ENCODE measurements at regions of chr7 and their contacts with region 1.

Region 1: DNA sequence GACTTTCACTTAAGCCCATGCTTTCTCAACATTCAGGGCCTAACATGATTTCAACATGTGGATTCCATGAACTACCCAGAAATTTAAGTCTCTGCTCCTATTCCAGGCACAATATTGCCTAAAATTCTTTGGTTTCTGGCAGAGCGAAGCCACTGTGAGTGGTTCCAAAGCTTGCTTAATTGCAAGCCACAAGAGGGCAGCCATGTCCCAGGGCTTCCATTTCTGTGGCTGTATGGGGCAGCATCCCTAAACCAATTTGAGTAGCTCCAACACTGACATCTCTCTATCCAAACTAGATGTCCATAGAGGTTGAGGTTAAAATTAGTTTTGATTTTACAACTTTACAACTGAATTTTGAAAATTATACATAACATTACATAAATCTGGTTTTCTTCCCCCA is 56.3 kb upstream of the MDFIC start:
- DNase-seq: peak; percentile 44 to 61 (median 55)
- H3K4me3 ChIP-seq: no peak overlapping the region
- H3K4me3 Mint-ChIP-seq: no peak overlapping the region
- H3K27ac ChIP-seq: no peak overlapping the region
- H3K27ac Mint-ChIP-seq: no peak overlapping the region
- H3K4me1 ChIP-seq: no peaks in the 10 kb centered on the region
- H3K4me1 Mint-ChIP-seq: peaks cover 2 to 14% (median 8%) of the 10 kb centered on the region in 4 donors
- H3K27me3 ChIP-seq: no peaks in the 10 kb centered on the region
- H3K27me3 Mint-ChIP-seq: no peaks in the 10 kb centered on the region

Region 2: DNA sequence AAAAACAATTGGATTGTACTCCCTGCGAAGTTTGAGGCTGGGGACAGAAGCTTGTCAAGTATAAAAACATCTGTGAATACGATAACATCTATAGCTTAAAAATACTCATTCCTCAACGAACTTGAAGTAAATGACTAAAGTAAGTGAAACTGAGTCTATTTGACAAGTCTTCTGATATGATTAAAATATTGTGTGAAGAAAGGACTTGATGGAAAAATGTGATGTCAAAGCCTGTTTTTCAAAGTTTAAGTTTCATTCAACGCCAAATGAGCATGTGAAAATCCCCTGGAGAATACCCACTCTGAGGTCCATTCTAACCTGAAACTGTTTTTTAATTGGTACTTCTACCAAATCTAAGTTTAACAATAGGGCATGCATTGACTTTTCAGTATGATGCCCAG is 65.9 kb before region 1 on chr7:
- CTCF ChIA-PET with region 1: no interaction called
- POLR2A ChIA-PET with region 1: no interaction called
- intact Hi-C with region 1: no loop called
- DNase-seq: no peak
- H3K4me3 ChIP-seq: no peak overlapping the region
- H3K4me3 Mint-ChIP-seq: no peak overlapping the region
- H3K27ac ChIP-seq: no peak overlapping the region
- H3K27ac Mint-ChIP-seq: no peak overlapping the region
- H3K4me1 ChIP-seq: no peaks in the 10 kb centered on the region
- H3K4me1 Mint-ChIP-seq: peaks cover 0 to 4% (median 3%) of the 10 kb centered on the region in 4 donors
- H3K27me3 ChIP-seq: no peaks in the 10 kb centered on the region
- H3K27me3 Mint-ChIP-seq: peaks cover 2 to 6% of the 10 kb centered on the region in 2 donors

Region 3: GRCh38 chr7:114939484-114940097 is 74.0 kb after region 1 on chr7:
- CTCF ChIA-PET with region 1: interaction called, 138 read pairs
- POLR2A ChIA-PET with region 1: interaction called, 5 read pairs
- intact Hi-C with region 1: loop called (anchors 1 kb)
- DNase-seq: peak in 1 of 5 donors; percentile 56
- H3K4me3 ChIP-seq: no peak overlapping the region
- H3K4me3 Mint-ChIP-seq: peak overlapping the region in 4 of 8 donors; percentile 32 to 61 (median 48)
- H3K27ac ChIP-seq: no peak overlapping the region
- H3K27ac Mint-ChIP-seq: peak overlapping the region in 2 of 7 donors; percentile 18 to 55
- H3K4me1 ChIP-seq: peaks cover 84% of the 10 kb centered on the region
- H3K4me1 Mint-ChIP-seq: peaks cover 60 to 80% (median 64%) of the 10 kb centered on the region in 4 donors
- H3K27me3 ChIP-seq: no peaks in the 10 kb centered on the region
- H3K27me3 Mint-ChIP-seq: no peaks in the 10 kb centered on the region

Region 4: GRCh38 chr7:114997487-114998404 is 132.2 kb after region 1 on chr7:
- CTCF ChIA-PET with region 1: interaction called, 13 read pairs
- POLR2A ChIA-PET with region 1: interaction called, 4 read pairs
- intact Hi-C with region 1: no loop called
- DNase-seq: no peak
- H3K4me3 ChIP-seq: no peak overlapping the region
- H3K4me3 Mint-ChIP-seq: peak overlapping the region in 7 of 8 donors; percentile 48 to 83 (median 72)
- H3K27ac ChIP-seq: no peak overlapping the region
- H3K27ac Mint-ChIP-seq: peak overlapping the region; percentile 57 to 86 (median 71)
- H3K4me1 ChIP-seq: peaks cover 62% of the 10 kb centered on the region
- H3K4me1 Mint-ChIP-seq: peaks cover 61 to 86% (median 72%) of the 10 kb centered on the region in 4 donors
- H3K27me3 ChIP-seq: no peaks in the 10 kb centered on the region
- H3K27me3 Mint-ChIP-seq: no peaks in the 10 kb centered on the region

Region 5: DNA sequence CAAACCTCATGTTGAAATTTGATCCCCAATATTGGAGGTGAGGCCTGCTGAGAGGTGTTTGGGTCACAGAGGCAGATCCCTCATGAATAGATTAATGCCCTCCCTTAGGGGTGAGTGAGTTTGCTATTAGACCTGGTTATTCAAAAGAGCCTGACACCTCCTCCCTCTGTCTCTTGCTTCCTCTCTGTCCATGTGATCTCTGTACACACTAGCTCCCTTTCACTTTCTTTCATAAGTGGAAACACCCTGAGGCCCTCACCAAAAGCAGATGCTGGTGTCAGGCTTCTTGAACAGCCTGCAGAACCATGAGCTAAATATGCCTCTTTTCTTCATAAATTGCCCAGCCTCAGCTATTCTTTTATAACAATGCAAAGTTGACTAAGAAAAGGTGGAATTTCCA is 503.4 kb after region 1 on chr7:
- CTCF ChIA-PET with region 1: interaction called, 5 read pairs
- POLR2A ChIA-PET with region 1: no interaction called
- intact Hi-C with region 1: loop called (anchors 5 kb)
- DNase-seq: no peak
- H3K4me3 ChIP-seq: no peak overlapping the region
- H3K4me3 Mint-ChIP-seq: no peak overlapping the region
- H3K27ac ChIP-seq: no peak overlapping the region
- H3K27ac Mint-ChIP-seq: no peak overlapping the region
- H3K4me1 ChIP-seq: no peaks in the 10 kb centered on the region
- H3K4me1 Mint-ChIP-seq: peaks cover 0 to 4% (median 2%) of the 10 kb centered on the region in 4 donors
- H3K27me3 ChIP-seq: no peaks in the 10 kb centered on the region
- H3K27me3 Mint-ChIP-seq: peaks cover 0 to 3% of the 10 kb centered on the region in 2 donors

Region 6: GRCh38 chr7:115707258-115708012 is 841.9 kb after region 1 on chr7:
- CTCF ChIA-PET with region 1: interaction called, 3 read pairs
- POLR2A ChIA-PET with region 1: no interaction called
- intact Hi-C with region 1: loop called (anchors 2 kb)
- DNase-seq: no peak
- H3K4me3 ChIP-seq: no peak overlapping the region
- H3K4me3 Mint-ChIP-seq: no peak overlapping the region
- H3K27ac ChIP-seq: no peak overlapping the region
- H3K27ac Mint-ChIP-seq: no peak overlapping the region
- H3K4me1 ChIP-seq: no peaks in the 10 kb centered on the region
- H3K4me1 Mint-ChIP-seq: peaks cover 0 to 1% (median under 1%) of the 10 kb centered on the region in 4 donors
- H3K27me3 ChIP-seq: no peaks in the 10 kb centered on the region
- H3K27me3 Mint-ChIP-seq: no peaks in the 10 kb centered on the region